ENCODE measurements at regions of chr17 and their contacts with region 1.

Region 1: DNA sequence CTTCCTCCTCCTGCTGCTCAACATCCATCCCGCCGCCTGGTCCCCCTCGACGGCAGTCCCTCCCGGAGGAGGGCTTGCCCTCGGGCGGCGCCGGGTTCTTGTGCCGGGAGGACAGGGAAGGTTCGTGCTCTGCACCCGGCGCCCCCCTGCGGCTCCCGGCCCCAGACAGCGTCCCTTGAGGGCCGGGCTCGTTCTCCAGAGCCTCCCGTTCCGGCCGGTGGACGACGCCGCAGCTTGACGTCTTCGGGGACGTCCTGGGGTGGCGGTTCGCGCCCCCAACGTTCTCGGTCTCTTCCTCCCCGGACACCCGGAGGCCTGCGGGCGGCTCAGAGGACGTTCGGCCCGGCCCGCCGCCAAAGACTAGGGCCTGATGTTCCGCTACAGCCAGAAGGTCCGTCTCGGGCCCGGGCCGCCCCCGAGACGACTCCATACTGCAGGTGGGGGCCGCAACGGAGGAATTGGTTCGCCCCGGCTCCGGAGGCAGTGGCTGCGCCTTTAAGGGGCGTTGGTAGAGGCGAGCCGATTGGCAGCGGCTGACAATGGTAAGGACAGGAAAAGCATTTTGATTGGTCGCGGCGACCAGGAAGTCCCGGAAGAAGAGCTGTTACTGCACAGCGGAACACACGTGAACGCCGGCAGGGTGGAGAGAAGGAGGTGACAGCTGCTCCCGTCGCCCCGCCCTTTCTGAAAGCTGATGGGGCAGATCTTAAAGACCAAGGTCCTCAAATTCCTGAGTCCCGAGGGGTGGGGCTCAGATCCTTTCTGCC is at the start of gene BORCS6:
- DNase-seq: peak; percentile 89 to 98 (median 96)
- ATAC-seq: peak; percentile 63 to 73 (median 68)
- H3K4me3 ChIP-seq: peak within 1 kb of the TSS; percentile 83 to 88 (median 84)
- H3K27ac ChIP-seq: peak within 1 kb of the TSS; percentile 82 to 98 (median 88)
- H3K4me1 ChIP-seq: peaks cover 0 to 28% (median 18%) of the 10 kb centered on the region in 3 donors
- H3K27me3 ChIP-seq: no peaks in the 10 kb centered on the region
- CTCF ChIP-seq: no peak
- total RNA-seq, gene BORCS6: 4.9 to 10.4 (median 6.9) TPM

Region 2: DNA sequence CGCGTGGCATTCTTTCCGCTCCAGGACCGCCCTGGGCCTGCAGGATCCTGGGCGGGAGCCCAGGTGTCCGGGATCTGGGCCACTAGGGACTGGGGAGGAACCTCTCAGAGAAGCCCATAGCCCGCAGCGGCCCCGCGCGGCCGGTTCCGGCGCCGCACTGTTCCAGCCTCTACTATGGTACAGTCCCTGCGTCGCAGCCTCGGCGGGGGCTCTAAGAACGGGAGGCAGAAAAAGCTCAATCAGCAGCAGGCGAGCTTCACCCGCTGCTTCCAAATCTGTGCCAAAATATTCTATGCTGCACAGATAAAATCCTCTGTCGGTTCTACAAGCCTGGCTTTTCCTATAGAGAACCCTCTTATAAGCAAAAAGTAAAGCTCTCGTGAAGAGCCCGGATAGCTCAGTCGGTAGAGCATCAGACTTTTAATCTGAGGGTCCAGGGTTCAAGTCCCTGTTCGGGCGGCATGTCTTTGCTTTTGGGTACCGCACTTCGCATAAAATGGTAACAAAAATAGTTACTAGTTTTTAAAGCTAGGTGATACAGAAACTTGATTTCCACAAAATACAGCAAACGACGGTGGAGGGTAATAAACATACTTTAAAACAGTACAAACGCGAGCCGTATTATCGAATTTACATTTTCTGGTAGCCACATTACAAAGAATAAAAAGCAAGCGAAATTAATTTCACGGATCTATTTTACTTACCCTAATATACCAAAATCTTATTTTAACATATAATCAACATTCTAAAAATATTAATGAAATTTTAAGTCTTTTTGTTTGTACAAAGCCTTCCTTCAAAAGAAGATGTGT is 70.9 kb before region 1 on chr17:
- intact Hi-C with region 1: loop called in 2 of 3 experiments (anchors 2 to 10 kb)
- DNase-seq: peak; percentile 83 to 96 (median 91)
- ATAC-seq: peak; percentile 75 to 79 (median 78)
- H3K4me3 ChIP-seq: peak overlapping the region; percentile 7 to 54 (median 34)
- H3K27ac ChIP-seq: peak overlapping the region; percentile 53 to 73 (median 64)
- H3K4me1 ChIP-seq: peaks cover 12 to 39% (median 28%) of the 10 kb centered on the region in 3 donors
- H3K27me3 ChIP-seq: peaks cover 0 to 9% (median 0%) of the 10 kb centered on the region in 4 donors
- CTCF ChIP-seq: peak; percentile 72 to 87 (median 73)

Region 3: DNA sequence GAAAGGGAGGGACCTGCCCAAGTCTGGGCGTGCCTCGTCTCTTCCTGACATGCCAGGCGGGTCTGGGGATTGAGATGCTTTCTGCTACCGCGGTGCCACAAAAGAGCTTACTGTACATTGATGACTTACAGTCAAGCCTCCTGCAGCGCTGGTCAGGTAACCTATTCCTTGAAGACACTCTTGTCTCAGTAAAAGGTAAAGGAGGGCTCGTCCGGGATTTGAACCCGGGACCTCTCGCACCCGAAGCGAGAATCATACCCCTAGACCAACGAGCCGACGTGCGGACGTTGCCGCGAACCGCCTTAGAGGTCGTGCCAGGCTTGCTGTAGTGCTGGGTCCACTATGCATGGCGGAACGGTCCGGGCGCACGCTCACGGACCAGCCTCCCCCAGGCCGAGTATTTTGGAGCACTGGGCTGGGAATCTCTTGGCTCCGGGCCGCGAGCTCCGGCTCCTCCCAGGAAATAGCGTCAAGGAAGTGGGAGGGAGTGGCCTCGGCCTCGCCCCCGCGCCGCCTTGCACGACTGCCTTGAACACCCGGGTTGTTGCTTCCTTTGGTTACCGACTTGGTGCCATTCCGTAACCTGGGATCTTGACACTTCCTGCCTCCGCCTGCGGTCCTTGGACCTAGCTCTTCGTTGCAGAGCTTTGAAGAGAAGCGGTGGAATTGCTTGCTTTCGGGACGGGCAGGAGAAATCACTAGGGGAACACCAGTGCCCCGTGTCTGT is 32.9 kb after region 1 on chr17:
- intact Hi-C with region 1: loop called in 2 of 3 experiments (anchors 2 to 5 kb)
- DNase-seq: peak; percentile 92 to 98 (median 96)
- ATAC-seq: peak; percentile 54 to 72 (median 67)
- H3K4me3 ChIP-seq: peak overlapping the region; percentile 38 to 63 (median 47)
- H3K27ac ChIP-seq: peak overlapping the region; percentile 89 to 97 (median 95)
- H3K4me1 ChIP-seq: peaks cover 7 to 16% (median 10%) of the 10 kb centered on the region in 3 donors
- H3K27me3 ChIP-seq: no peaks in the 10 kb centered on the region
- CTCF ChIP-seq: no peak